ENCODE measurements at regions of chr3 and their contacts with region 1.

Region 1: GRCh38 chr3:100260685-100261484 is at the start of gene TBC1D23:
- DNase-seq: peak; percentile 98
- ATAC-seq: peak; percentile 100
- H3K4me3 Mint-ChIP-seq: peak within 1 kb of the TSS; percentile 88
- H3K27ac Mint-ChIP-seq: peak within 1 kb of the TSS; percentile 93
- H3K4me1 Mint-ChIP-seq: peaks cover 53% of the 10 kb centered on the region
- H3K27me3 Mint-ChIP-seq: no peaks in the 10 kb centered on the region
- CTCF ChIP-seq: no peak
- total RNA-seq, gene TBC1D23: 14.4 to 20.5 TPM

Region 2: GRCh38 chr3:99833617-99834205 is 427.2 kb before region 1 on chr3:
- CTCF ChIA-PET with region 1: interaction called, 26 read pairs
- POLR2A ChIA-PET with region 1: no interaction called
- intact Hi-C with region 1: no loop called
- DNase-seq: no peak
- ATAC-seq: no peak
- H3K4me3 Mint-ChIP-seq: no peak overlapping the region
- H3K27ac Mint-ChIP-seq: no peak overlapping the region
- H3K4me1 Mint-ChIP-seq: peaks cover 15% of the 10 kb centered on the region
- H3K27me3 Mint-ChIP-seq: no peaks in the 10 kb centered on the region
- CTCF ChIP-seq: no peak

Region 3: DNA sequence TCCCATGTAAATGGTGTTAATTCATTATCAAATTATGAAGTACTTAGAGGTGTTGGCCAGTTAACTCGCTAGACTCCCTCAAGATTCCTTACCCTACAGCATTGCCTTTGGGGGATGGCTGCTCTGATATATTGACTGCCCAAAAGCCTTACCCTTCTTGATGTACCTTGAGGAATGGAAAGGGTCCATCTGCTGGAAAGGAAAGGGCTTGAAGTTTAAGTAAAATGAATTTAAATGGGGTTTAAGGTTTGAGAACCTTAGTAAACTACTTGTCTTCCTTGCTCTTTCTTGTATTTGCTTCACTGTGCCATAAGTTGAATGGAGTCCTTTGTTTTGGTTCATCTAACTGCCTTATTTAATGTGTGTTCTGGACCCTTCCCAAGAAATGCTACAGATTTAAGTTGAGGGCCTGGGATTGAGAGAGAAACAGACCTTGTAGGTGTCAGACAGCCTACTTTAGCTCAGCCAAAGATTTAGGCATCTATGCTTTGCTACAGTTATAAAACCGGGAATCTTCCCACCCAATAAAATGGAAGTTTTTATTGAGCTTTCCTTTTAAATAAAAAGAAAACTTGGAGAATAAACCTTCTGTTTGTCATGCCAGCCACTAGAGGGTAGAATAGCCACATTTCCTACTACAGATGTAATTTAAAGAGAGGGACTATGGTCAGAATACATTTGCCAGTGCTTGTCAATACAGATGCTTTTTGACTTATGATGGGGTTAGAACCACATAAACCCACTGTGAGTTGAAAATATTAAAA is 417.9 kb before region 1 on chr3:
- CTCF ChIA-PET with region 1: interaction called, 13 read pairs
- POLR2A ChIA-PET with region 1: no interaction called
- intact Hi-C with region 1: no loop called
- DNase-seq: no peak
- ATAC-seq: no peak
- H3K4me3 Mint-ChIP-seq: no peak overlapping the region
- H3K27ac Mint-ChIP-seq: no peak overlapping the region
- H3K4me1 Mint-ChIP-seq: peaks cover 12% of the 10 kb centered on the region
- H3K27me3 Mint-ChIP-seq: no peaks in the 10 kb centered on the region
- CTCF ChIP-seq: peak; percentile 62

Region 4: DNA sequence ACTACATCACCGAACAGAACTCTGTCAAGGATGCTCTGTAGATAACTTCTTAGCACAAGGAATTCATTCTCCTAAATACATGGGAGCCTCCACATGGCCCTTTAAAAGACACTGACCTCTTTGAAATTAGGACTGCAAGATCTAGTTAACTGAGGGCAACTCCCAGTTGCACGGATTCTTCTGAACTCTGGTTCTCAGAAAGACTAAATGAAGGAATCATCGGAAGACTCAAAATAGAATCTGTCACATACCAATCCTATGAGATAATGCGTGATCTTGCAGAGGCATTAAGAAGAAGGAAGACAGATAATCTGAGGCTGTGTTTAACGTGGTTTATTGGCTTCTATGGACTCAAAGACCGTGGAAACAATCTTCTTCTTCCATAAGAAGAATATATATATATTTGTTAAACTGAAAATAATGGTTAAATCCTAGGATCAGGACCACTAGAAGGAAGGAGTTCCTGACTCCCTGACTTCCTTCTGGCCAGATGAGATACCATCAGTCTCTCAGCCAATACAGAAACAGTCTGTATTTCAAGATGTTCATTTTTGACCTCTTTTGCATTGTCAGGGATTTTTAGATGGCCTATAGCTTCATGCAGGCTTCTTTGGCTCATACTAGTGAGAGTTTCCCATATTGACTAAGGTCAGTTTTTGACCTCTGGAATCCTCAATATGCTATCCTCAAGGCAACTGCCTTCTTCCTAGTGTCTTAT is 34.0 kb before region 1 on chr3:
- CTCF ChIA-PET with region 1: no interaction called
- POLR2A ChIA-PET with region 1: no interaction called
- intact Hi-C with region 1: no loop called
- DNase-seq: no peak
- ATAC-seq: no peak
- H3K4me3 Mint-ChIP-seq: no peak overlapping the region
- H3K27ac Mint-ChIP-seq: no peak overlapping the region
- H3K4me1 Mint-ChIP-seq: no peaks in the 10 kb centered on the region
- H3K27me3 Mint-ChIP-seq: peaks cover 2% of the 10 kb centered on the region
- CTCF ChIP-seq: no peak

Measured in activated CD8-positive, alpha-beta T cell treated with anti-CD3 and anti-CD28 coated beads for 36 hours (primary cell).